ENCODE measurements at regions of chr1 and their contacts with region 1.

Region 1: GRCh38 chr1:227762233-227762911 is 27.1 kb downstream of the SNAP47 start:
- DNase-seq: peak; percentile 70 to 94
- H3K4me3 ChIP-seq: no peak overlapping the region
- H3K27ac ChIP-seq: peak overlapping the region; percentile 87
- H3K4me1 ChIP-seq: peaks cover 57% of the 10 kb centered on the region
- H3K27me3 ChIP-seq: no peaks in the 10 kb centered on the region
- CTCF ChIP-seq: peak; percentile 87

Region 2: GRCh38 chr1:227576189-227576588 is 186.2 kb before region 1 on chr1:
- CTCF ChIA-PET with region 1: no interaction called
- POLR2A ChIA-PET with region 1: no interaction called
- intact Hi-C with region 1: no loop called
- DNase-seq: no peak
- H3K4me3 ChIP-seq: no peak overlapping the region
- H3K27ac ChIP-seq: no peak overlapping the region
- H3K4me1 ChIP-seq: no peaks in the 10 kb centered on the region
- H3K27me3 ChIP-seq: no peaks in the 10 kb centered on the region
- CTCF ChIP-seq: no peak

Region 3: DNA sequence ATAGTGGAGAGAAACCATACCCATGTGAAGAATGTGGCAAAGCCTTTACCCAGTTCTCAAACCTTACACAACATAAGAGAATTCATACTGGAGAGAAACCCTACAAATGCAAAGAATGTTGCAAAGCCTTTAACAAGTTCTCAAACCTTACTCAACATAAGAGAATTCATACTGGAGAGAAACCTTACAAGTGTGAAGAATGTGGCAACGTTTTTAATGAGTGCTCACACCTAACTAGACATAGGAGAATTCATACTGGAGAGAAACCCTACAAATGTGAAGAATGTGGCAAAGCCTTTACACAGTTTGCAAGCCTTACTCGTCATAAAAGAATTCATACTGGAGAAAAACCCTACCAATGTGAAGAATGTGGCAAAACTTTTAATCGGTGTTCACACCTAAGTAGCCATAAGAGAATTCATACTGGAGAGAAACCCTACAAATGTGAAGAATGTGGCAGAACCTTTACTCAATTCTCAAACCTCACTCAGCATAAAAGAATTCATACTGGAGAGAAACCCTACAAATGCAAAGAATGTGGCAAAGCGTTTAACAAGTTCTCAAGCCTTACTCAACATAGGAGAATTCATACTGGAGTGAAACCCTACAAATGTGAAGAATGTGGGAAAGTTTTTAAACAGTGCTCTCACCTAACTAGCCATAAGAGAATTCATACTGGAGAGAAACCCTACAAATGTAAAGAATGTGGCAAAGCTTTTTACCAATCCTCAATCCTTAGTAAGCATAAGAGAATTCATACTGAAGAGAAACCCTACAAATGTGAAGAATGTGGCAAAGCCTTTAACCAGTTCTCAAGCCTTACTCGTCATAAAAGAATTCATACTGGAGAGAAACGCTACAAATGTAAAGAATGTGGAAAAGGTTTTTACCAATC is 107.3 kb before region 1 on chr1:
- CTCF ChIA-PET with region 1: no interaction called
- POLR2A ChIA-PET with region 1: no interaction called
- intact Hi-C with region 1: no loop called
- DNase-seq: no peak
- H3K4me3 ChIP-seq: no peak overlapping the region
- H3K27ac ChIP-seq: no peak overlapping the region
- H3K4me1 ChIP-seq: no peaks in the 10 kb centered on the region
- H3K27me3 ChIP-seq: no peaks in the 10 kb centered on the region
- CTCF ChIP-seq: no peak

Region 4: DNA sequence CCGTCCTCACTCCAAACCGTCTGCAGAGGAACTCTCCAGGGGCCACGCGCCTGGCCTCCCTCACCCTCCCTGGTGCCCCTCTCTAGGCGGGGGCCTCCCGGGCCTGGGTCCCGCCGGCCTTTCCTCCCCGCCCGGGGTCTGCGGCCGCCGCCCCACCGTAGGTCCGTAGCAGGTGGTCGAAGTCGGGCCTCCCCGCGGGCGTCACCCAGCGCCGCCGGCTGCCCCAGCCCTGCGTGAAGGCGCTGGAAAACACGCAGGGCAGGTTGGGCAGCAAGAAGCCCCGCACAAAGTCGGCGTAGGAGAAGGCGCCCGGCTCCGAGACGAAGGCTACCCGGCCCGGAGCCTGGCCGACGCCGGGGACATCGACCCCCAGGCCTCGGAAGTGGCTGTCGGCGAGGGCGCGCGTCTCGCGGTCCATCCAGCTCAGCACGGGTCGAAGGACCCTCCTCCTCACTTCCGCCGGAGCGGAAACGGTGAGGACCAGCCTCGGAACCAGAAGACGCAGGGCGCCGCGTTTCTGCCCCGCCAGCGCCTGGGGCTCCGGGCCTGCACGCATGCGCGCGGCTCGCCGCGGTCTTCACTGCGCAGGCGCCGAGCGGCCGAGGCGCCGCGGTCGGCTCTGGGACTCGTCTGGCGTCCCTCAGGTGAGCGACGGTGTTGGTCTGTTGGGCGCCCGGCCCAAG is 27.4 kb before region 1 on chr1 and contains the starts of genes JMJD4 and SNAP47:
- CTCF ChIA-PET with region 1: interaction called, 9 read pairs
- POLR2A ChIA-PET with region 1: no interaction called
- intact Hi-C with region 1: loop called (anchors 1 kb)
- DNase-seq: peak; percentile 75 to 97
- H3K4me3 ChIP-seq: peak within 1 kb of the TSS; percentile 99
- H3K27ac ChIP-seq: 0 out of 2 replicates have a peak within 1 kb of the TSS, but pooled peaks have one; percentile 1
- H3K4me1 ChIP-seq: peaks cover 17% of the 10 kb centered on the region; the same call in 1 of the 2 replicates
- H3K27me3 ChIP-seq: no peaks in the 10 kb centered on the region
- CTCF ChIP-seq: no peak
- total RNA-seq, gene JMJD4: 15.1 and 20.9 TPM in 2 replicates
- total RNA-seq, gene SNAP47: 66.3 and 70.2 TPM in 2 replicates

Region 5: GRCh38 chr1:227805606-227806197 is 43.3 kb after region 1 on chr1:
- CTCF ChIA-PET with region 1: interaction called, 5 read pairs
- POLR2A ChIA-PET with region 1: interaction called, 4 read pairs
- intact Hi-C with region 1: loop called (anchors 1 kb)
- DNase-seq: peak; percentile 82 to 94
- H3K4me3 ChIP-seq: no peak overlapping the region
- H3K27ac ChIP-seq: peak overlapping the region; percentile 45
- H3K4me1 ChIP-seq: peaks cover 20% of the 10 kb centered on the region
- H3K27me3 ChIP-seq: no peaks in the 10 kb centered on the region
- CTCF ChIP-seq: no peak

Region 6: GRCh38 chr1:227901906-227902645 is 139.7 kb after region 1 on chr1:
- CTCF ChIA-PET with region 1: no interaction called
- POLR2A ChIA-PET with region 1: no interaction called
- intact Hi-C with region 1: no loop called
- DNase-seq: no peak
- H3K4me3 ChIP-seq: no peak overlapping the region
- H3K27ac ChIP-seq: no peak overlapping the region
- H3K4me1 ChIP-seq: no peaks in the 10 kb centered on the region
- H3K27me3 ChIP-seq: no peaks in the 10 kb centered on the region
- CTCF ChIP-seq: peak; percentile 37; the same call in 1 of the 2 replicates

Region 7: DNA sequence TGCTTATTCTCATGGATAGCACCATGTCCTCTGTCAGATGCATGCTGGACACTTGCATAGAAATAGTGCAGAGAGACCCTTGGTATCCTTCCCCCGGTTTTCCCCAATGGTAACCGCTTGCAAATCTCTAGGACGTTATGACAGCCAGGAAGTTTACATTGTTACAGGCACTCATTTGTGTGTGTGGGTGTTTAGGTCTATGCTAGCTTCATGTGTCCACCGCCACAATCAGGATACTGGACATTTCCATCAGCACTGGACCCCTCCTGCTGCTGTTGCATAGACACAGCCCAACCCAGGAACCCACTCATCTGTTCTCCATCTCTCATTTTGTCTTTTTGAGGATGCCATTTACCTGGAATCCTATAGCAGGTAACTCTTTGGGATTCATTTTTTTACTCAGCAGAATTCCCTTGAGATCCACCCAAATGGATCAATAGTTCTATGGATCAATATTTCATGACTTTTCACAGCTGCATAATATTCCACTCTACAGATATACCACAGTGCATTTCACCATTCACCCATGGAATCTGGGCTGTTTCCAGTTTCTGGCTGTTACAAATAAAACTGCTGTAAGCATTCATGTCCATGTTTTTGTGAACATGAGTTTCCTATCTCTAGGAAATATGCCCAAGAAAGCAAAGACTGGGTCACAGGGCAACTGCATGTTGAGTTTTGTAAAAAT is 191.9 kb after region 1 on chr1:
- CTCF ChIA-PET with region 1: interaction called, 12 read pairs
- POLR2A ChIA-PET with region 1: interaction called, 4 read pairs
- intact Hi-C with region 1: no loop called
- DNase-seq: no peak
- H3K4me3 ChIP-seq: no peak overlapping the region
- H3K27ac ChIP-seq: no peak overlapping the region
- H3K4me1 ChIP-seq: no peaks in the 10 kb centered on the region
- H3K27me3 ChIP-seq: peaks cover 22% of the 10 kb centered on the region; the same call in 1 of the 2 replicates
- CTCF ChIP-seq: peak; percentile 14; the same call in 1 of the 2 replicates

Region 8: DNA sequence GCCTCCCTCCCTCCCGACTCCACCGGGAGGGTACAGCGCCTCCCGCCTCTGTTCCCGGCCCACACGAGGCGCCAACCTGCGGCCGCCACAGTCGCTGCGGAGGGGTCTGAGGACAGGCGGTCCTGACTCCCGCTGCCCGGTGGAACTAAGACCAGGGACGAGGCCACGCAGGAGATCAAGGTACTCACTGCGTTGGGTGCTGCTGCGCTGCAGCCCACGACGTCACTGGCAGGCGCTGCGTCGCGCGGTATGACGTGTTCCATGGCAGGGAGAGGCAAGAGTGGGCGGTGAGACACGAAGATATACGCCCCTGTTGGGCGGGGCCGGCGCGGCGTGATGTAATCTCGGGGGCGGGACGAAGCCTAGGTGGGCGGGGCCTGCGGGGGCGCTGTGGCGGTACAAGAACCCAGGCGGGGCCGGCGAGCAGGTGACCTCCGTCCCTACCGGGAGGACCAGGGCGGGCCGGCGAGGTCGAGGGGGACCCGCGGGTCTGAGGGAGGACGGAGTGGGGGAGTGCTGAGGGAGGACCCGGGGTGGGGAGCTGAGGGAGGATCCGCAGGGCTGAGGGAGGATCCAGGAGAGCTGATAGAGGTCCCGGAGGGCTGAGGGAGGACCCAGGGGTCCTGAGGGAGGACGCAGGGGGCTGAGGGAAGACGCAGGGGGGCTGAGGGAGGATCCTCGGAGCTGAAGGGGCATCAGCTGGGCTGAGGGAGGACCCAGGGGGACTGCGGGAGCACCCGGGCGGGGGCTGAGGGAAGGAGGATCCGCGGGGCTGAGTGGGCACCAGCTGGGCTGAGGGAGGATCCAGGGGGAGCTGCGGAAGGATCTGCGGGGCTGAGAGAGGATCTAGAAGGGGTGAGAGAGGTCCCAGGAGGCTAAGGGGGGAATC is 346.9 kb after region 1 on chr1 and contains the start of gene MRPL55:
- CTCF ChIA-PET with region 1: no interaction called
- POLR2A ChIA-PET with region 1: no interaction called
- intact Hi-C with region 1: loop called (anchors 1 kb)
- DNase-seq: peak; percentile 90 to 99
- H3K4me3 ChIP-seq: peak within 1 kb of the TSS; percentile 97
- H3K27ac ChIP-seq: no peak within 1 kb of the TSS
- H3K4me1 ChIP-seq: peaks cover 6% of the 10 kb centered on the region
- H3K27me3 ChIP-seq: no peaks in the 10 kb centered on the region
- CTCF ChIP-seq: no peak
- total RNA-seq, gene MRPL55: 81.0 and 84.4 TPM in 2 replicates

Region 9: GRCh38 chr1:228393248-228393699 is 630.9 kb after region 1 on chr1:
- CTCF ChIA-PET with region 1: no interaction called
- POLR2A ChIA-PET with region 1: interaction called, 9 read pairs
- intact Hi-C with region 1: loop called (anchors 1 kb)
- DNase-seq: peak; percentile 63 to 79
- H3K4me3 ChIP-seq: no peak overlapping the region
- H3K27ac ChIP-seq: peak overlapping the region; percentile 17; the same call in 1 of the 2 replicates
- H3K4me1 ChIP-seq: peaks cover 20% of the 10 kb centered on the region
- H3K27me3 ChIP-seq: no peaks in the 10 kb centered on the region
- CTCF ChIP-seq: peak; percentile 57; the same call in 1 of the 2 replicates